ENCODE measurements at regions of chr16 and their contacts with region 1.

Region 1: DNA sequence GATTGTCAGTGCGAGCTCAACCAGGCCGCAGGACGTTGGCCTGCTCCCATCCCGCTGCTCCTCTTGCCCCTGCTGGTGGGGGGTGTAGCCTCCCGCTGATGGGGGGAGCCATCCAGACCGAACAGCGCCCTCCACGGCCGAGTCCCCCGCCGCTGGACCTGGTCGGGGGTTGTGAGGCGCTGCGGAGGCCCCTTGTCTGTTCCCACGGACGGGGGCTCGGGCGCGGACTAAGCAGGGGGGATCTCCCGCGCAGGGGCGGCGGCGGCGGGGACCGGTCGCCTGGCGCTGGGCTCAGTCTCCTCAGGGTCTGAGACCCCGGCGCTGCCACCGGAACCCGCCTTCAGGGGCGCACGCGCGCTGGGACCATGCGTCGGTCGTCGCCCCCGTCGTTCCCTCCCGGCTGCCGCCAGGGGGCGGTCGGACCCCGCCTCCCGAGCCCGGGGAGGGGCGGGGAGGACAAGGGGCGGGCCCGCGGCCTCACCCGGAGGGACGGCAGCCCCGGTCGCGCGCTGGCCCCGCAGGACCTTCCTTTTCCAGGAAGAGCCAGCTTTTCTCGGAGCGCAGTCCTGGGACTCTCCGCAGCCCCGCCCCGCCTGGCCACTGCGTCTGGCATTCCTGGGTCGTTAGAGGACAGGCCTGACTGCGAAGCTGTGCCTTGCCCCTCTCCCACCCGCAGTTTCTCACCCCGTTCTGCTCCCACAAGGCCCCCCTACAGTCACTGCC is 6.3 kb upstream of the IL32 start:
- DNase-seq: peak; percentile 83 to 89 (median 85)
- H3K4me3 ChIP-seq: peak overlapping the region; percentile 71
- H3K4me3 Mint-ChIP-seq: peak overlapping the region; percentile 90 to 97 (median 93)
- H3K27ac ChIP-seq: peak overlapping the region; percentile 75
- H3K27ac Mint-ChIP-seq: peak overlapping the region; percentile 85 to 97 (median 91)
- H3K4me1 ChIP-seq: peaks cover 51% of the 10 kb centered on the region
- H3K4me1 Mint-ChIP-seq: peaks cover 46 to 76% (median 61%) of the 10 kb centered on the region in 3 donors
- H3K27me3 ChIP-seq: no peaks in the 10 kb centered on the region
- H3K27me3 Mint-ChIP-seq: no peaks in the 10 kb centered on the region

Region 2: GRCh38 chr16:3023669-3024478 is 35.3 kb before region 1 on chr16 and contains the starts of genes HCFC1R1 and THOC6:
- CTCF ChIA-PET with region 1: interaction called, 82 read pairs
- POLR2A ChIA-PET with region 1: no interaction called
- DNase-seq: peak; percentile 91 to 97 (median 94)
- H3K4me3 ChIP-seq: peak within 1 kb of the TSS; percentile 88
- H3K4me3 Mint-ChIP-seq: peak within 1 kb of the TSS; percentile 87 to 98 (median 93)
- H3K27ac ChIP-seq: peak within 1 kb of the TSS; percentile 88
- H3K27ac Mint-ChIP-seq: peak within 1 kb of the TSS; percentile 78 to 97 (median 96)
- H3K4me1 ChIP-seq: peaks cover 46% of the 10 kb centered on the region
- H3K4me1 Mint-ChIP-seq: peaks cover 42 to 66% (median 48%) of the 10 kb centered on the region in 3 donors
- H3K27me3 ChIP-seq: peaks cover under 1% of the 10 kb centered on the region
- H3K27me3 Mint-ChIP-seq: peaks cover 0 to 3% of the 10 kb centered on the region in 2 donors
- total RNA-seq, gene HCFC1R1: 25.6 to 26.3 TPM
- total RNA-seq, gene THOC6: 56.8 to 59.4 TPM

Region 3: GRCh38 chr16:3045357-3045728 is 13.8 kb before region 1 on chr16:
- CTCF ChIA-PET with region 1: interaction called, 31 read pairs
- POLR2A ChIA-PET with region 1: interaction called, 5 read pairs
- DNase-seq: no peak
- H3K4me3 ChIP-seq: peak overlapping the region; percentile 51
- H3K4me3 Mint-ChIP-seq: peak overlapping the region; percentile 56 to 89 (median 83)
- H3K27ac ChIP-seq: no peak overlapping the region
- H3K27ac Mint-ChIP-seq: peak overlapping the region in 3 of 8 donors; percentile 36 to 50 (median 42)
- H3K4me1 ChIP-seq: peaks cover 27% of the 10 kb centered on the region
- H3K4me1 Mint-ChIP-seq: peaks cover 14 to 33% (median 24%) of the 10 kb centered on the region in 3 donors
- H3K27me3 ChIP-seq: peaks cover 45% of the 10 kb centered on the region
- H3K27me3 Mint-ChIP-seq: peaks cover 14 to 34% of the 10 kb centered on the region in 2 donors

Region 4: GRCh38 chr16:3094289-3095027 is 35.3 kb after region 1 on chr16:
- CTCF ChIA-PET with region 1: interaction called, 49 read pairs
- POLR2A ChIA-PET with region 1: interaction called, 5 read pairs
- DNase-seq: peak; percentile 38 to 69 (median 50)
- H3K4me3 ChIP-seq: no peak overlapping the region
- H3K4me3 Mint-ChIP-seq: peak overlapping the region in 6 of 7 donors; percentile 14 to 39 (median 24)
- H3K27ac ChIP-seq: no peak overlapping the region
- H3K27ac Mint-ChIP-seq: peak overlapping the region; percentile 28 to 89 (median 68)
- H3K4me1 ChIP-seq: peaks cover 39% of the 10 kb centered on the region
- H3K4me1 Mint-ChIP-seq: peaks cover 29 to 59% (median 31%) of the 10 kb centered on the region in 3 donors
- H3K27me3 ChIP-seq: no peaks in the 10 kb centered on the region
- H3K27me3 Mint-ChIP-seq: no peaks in the 10 kb centered on the region

Region 5: DNA sequence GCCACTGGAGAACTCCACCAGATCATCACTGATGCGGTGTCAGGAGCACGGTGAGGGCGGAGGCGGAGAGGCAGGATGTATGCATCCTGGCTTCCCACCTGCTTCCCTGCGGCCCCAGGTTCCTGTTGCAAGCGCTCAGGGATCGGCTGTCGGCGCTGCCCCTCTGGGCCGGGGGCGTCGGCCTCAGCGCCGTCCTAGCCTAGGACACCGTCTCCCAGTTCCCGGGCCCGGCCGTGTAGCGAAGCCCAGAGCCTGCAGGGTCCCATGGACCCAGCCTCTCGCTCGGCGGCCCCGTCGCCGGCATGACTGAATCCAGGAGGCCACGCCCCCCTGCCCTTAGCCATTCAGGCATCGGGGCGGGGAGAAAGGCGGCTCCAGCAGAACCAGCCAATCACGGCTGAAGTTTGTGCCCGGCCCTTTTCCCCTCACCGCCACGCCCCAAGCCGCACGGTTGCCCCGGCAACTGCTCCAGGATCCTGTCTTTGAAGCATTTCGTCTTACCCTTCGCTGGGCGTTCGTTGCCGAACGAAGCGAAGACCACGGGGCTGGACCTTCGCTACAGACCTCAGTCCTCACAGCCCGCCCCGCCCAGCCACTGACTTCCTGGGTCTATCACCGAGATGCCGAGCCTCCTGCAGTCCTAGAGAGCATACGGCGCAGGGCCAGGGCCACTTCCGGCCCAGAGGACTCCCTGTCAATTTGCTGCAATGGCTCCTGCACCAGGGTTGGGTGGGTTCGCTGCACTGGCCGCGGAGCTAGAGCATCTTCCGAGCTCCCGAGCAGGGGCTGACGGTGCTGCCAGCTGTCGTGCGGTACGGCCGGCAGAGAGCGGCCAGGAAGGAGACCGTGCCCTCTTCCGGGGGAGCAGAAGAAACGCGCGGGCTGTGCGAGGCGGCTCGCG is 65.1 kb after region 1 on chr16:
- CTCF ChIA-PET with region 1: interaction called, 190 read pairs
- POLR2A ChIA-PET with region 1: interaction called, 28 read pairs
- DNase-seq: peak; percentile 95 to 97 (median 96)
- H3K4me3 ChIP-seq: peak overlapping the region; percentile 89
- H3K4me3 Mint-ChIP-seq: peak overlapping the region; percentile 95 to 99 (median 97)
- H3K27ac ChIP-seq: peak overlapping the region; percentile 60
- H3K27ac Mint-ChIP-seq: peak overlapping the region; percentile 88 to 97 (median 96)
- H3K4me1 ChIP-seq: peaks cover 28% of the 10 kb centered on the region
- H3K4me1 Mint-ChIP-seq: peaks cover 35 to 59% (median 45%) of the 10 kb centered on the region in 3 donors
- H3K27me3 ChIP-seq: no peaks in the 10 kb centered on the region
- H3K27me3 Mint-ChIP-seq: no peaks in the 10 kb centered on the region

Region 6: DNA sequence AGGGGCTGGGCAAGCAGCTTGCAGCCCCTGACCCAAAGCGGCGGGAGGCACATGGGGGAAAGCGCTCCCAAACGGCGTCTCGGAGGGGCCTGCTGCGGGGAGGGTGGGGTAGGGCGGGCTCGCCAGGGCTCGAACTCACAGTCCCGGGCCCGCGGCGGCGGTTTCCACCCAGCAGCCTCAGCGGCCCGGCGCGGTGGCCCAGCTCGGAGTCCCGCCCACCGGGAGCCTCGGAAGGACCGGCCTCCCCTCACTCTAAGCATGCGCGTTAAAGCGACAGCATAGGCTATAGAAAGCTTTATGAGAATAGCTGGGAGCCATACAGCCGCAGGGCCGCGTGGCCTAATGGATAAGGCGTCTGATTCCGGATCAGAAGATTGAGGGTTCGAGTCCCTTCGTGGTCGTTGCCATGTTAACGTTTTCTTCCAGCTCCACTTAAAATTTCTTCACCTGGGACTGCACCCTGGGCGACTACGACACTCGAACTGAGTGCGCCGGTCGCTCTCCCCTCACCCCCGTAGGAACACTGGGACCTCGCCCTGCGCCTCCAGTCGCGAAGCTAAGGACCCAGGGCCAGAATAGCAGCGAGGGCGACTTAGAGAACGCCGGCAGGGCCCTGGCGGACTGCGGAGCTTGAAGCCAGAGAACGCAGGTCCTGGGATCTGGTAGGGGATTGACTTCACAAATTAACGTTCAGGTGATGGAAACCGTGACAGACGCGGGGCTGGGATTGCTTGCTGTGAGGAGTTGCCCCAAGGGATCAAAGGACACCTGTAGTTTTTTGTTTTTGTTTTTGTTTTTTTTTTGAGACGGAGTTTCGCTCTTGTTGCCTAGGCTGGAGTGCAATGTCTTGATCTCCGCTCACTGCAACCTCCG is 91.4 kb after region 1 on chr16:
- CTCF ChIA-PET with region 1: interaction called, 11 read pairs
- POLR2A ChIA-PET with region 1: no interaction called
- DNase-seq: peak; percentile 92 to 98 (median 96)
- H3K4me3 ChIP-seq: peak overlapping the region; percentile 97
- H3K4me3 Mint-ChIP-seq: peak overlapping the region; percentile 87 to 94 (median 90)
- H3K27ac ChIP-seq: peak overlapping the region; percentile 70
- H3K27ac Mint-ChIP-seq: peak overlapping the region; percentile 66 to 99 (median 92)
- H3K4me1 ChIP-seq: peaks cover 24% of the 10 kb centered on the region
- H3K4me1 Mint-ChIP-seq: peaks cover 21 to 40% (median 30%) of the 10 kb centered on the region in 3 donors
- H3K27me3 ChIP-seq: no peaks in the 10 kb centered on the region
- H3K27me3 Mint-ChIP-seq: peaks cover 0 to 18% of the 10 kb centered on the region in 2 donors

Region 7: DNA sequence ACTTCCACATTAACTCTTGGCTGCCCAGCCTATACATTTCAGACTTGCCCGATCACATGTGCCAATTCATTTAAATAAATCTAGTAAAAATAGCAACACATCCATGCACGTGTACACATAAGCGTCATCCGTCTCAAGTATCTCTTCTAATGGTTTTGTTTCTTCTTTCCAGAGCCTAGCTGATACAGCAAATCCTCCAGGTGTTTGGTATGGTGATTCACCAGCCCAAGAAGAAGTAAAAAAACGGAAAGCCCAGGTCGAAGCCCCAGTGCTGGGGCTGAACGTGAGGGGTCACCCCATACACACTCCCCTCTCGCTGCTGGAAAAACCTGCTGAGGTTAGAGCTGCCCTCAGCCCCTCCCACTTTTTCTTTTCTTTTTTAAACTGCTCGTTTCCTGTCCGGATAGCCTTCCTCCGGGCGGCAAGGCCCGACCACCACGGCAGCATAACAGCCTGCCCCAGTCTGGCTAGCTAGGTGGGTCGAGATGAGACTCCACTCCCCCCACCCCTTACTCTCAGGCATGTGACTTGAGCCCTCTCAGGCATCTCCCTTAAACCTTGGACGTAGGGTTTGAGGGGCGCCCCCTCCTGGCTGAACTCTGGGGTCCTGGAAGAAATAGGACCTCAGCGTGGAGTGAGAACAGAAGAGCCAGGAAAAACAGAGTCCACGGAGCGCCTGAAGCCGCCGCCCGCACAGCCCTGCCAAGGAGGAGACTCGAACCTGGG is 114.9 kb after region 1 on chr16:
- CTCF ChIA-PET with region 1: no interaction called
- POLR2A ChIA-PET with region 1: no interaction called
- DNase-seq: no peak
- H3K4me3 ChIP-seq: no peak overlapping the region
- H3K4me3 Mint-ChIP-seq: peak overlapping the region; percentile 14 to 44 (median 27)
- H3K27ac ChIP-seq: no peak overlapping the region
- H3K27ac Mint-ChIP-seq: peak overlapping the region in 2 of 8 donors; percentile 38 to 43
- H3K4me1 ChIP-seq: peaks cover 35% of the 10 kb centered on the region
- H3K4me1 Mint-ChIP-seq: peaks cover 31 to 45% (median 43%) of the 10 kb centered on the region in 3 donors
- H3K27me3 ChIP-seq: peaks cover 42% of the 10 kb centered on the region
- H3K27me3 Mint-ChIP-seq: peaks cover 48 to 53% of the 10 kb centered on the region in 2 donors